ENCODE measurements at regions of chr7 and their contacts with region 1.

Region 1: GRCh38 chr7:115047968-115048720 is 126.2 kb downstream of the MDFIC start:
- DNase-seq: peak; percentile 88
- H3K4me3 ChIP-seq: no peak overlapping the region
- H3K27ac ChIP-seq: no peak overlapping the region
- H3K4me1 ChIP-seq: peaks cover 16% of the 10 kb centered on the region
- H3K27me3 ChIP-seq: peaks cover 23 to 75% of the 10 kb centered on the region in 2 experiments
- CTCF ChIP-seq: no peak
- POLR2A ChIP-seq: peak; percentile 33

Region 2: DNA sequence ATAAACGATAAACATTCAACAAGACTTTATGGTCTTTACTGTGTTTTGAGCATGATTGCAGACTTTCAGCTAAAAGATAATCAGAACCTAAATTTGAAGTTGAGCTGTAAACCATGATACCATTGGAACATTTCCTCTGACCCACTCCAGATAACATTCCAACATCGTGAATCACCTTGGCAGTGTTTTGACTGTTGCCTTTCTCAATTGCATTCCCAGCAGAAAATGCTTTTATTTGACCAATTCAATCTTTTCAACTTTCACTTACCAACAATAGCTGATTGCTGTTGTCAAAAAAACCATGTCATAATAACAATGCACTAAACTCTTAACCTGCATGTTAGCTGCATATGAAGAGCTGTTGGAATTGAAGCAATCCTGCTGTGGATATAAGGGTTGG is 39.3 kb after region 1 on chr7:
- CTCF ChIA-PET with region 1: no interaction called
- POLR2A ChIA-PET with region 1: no interaction called
- dilution Hi-C with region 1: no loop called
- intact Hi-C with region 1: loop called (anchors 1 kb)
- DNase-seq: peak; percentile 97
- H3K4me3 ChIP-seq: no peak overlapping the region
- H3K27ac ChIP-seq: peak overlapping the region; percentile 44
- H3K4me1 ChIP-seq: peaks cover 16% of the 10 kb centered on the region
- H3K27me3 ChIP-seq: no peaks in the 10 kb centered on the region
- CTCF ChIP-seq: no peak
- POLR2A ChIP-seq: no peak

Region 3: GRCh38 chr7:115145512-115145911 is 97.4 kb after region 1 on chr7:
- CTCF ChIA-PET with region 1: no interaction called
- POLR2A ChIA-PET with region 1: no interaction called
- dilution Hi-C with region 1: no loop called
- intact Hi-C with region 1: no loop called
- DNase-seq: no peak
- H3K4me3 ChIP-seq: no peak overlapping the region
- H3K27ac ChIP-seq: no peak overlapping the region
- H3K4me1 ChIP-seq: no peaks in the 10 kb centered on the region
- H3K27me3 ChIP-seq: no peaks in the 10 kb centered on the region
- CTCF ChIP-seq: no peak
- POLR2A ChIP-seq: no peak

Region 4: GRCh38 chr7:115249080-115249479 is 200.9 kb after region 1 on chr7:
- CTCF ChIA-PET with region 1: no interaction called
- POLR2A ChIA-PET with region 1: no interaction called
- dilution Hi-C with region 1: no loop called
- intact Hi-C with region 1: loop called (anchors 1 kb)
- DNase-seq: peak; percentile 30
- H3K4me3 ChIP-seq: no peak overlapping the region
- H3K27ac ChIP-seq: no peak overlapping the region
- H3K4me1 ChIP-seq: peaks cover 8% of the 10 kb centered on the region
- H3K27me3 ChIP-seq: no peaks in the 10 kb centered on the region
- CTCF ChIP-seq: no peak
- POLR2A ChIP-seq: no peak